Esophagus muscularis mucosa (tissue), 4 donors: ENCODE measurements at regions of chr2 and their contacts with region 1.

Region 1: GRCh38 chr2:177405029-177405692 is 12.6 kb downstream of the AGPS start:
- DNase-seq: no peak
- H3K4me3 ChIP-seq: no peak overlapping the region
- H3K27ac ChIP-seq: no peak overlapping the region
- H3K4me1 ChIP-seq: peaks cover 0 to 32% (median 18%) of the 10 kb centered on the region in 4 donors
- H3K27me3 ChIP-seq: no peaks in the 10 kb centered on the region
- CTCF ChIP-seq: no peak
- EP300 ChIP-seq: no peak
- POLR2A ChIP-seq: no peak

Region 2: GRCh38 chr2:177338177-177338721 is 66.9 kb before region 1 on chr2:
- intact Hi-C with region 1: loop called (anchors 2 kb)
- DNase-seq: no peak
- H3K4me3 ChIP-seq: no peak overlapping the region
- H3K27ac ChIP-seq: no peak overlapping the region
- H3K4me1 ChIP-seq: no peaks in the 10 kb centered on the region
- H3K27me3 ChIP-seq: no peaks in the 10 kb centered on the region
- CTCF ChIP-seq: no peak
- EP300 ChIP-seq: no peak
- POLR2A ChIP-seq: no peak